Naive thymus-derived CD4-positive, alpha-beta T cell (primary cell): ENCODE measurements at regions of chr20 and their contacts with region 1.

Region 1: DNA sequence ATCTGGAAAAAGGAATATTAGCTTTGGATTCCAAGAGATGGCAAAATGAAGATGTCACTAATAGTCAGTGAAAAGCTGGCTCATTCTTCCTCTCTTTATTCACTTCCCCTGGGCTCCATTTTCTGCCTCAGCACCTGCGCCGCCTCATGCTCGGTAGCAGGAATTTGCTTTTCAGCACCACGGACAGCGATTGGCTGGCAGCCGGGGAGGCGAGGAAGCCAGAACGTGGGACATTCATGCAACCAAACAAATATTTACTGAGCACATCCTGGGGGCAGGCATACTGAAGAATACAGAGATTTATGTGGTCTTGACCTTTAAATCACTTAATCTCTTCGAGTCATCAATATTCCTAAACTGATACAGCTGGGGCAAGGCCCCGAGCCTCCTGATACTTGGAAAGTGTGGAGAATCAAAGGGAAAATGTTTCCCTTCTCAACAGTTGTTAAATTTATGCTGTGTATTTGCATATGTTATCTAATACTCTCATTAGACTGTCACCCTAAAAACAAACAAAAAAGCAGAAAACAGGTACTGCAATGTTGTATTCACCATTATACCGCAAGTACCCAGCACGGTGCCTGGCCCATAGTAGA is 12.1 kb upstream of the PDYN start:
- DNase-seq: peak; percentile 14 to 70 (median 46)
- ATAC-seq: no peak
- H3K4me3 ChIP-seq: no peak overlapping the region
- H3K4me3 Mint-ChIP-seq: no peak overlapping the region
- H3K27ac ChIP-seq: no peak overlapping the region
- H3K27ac Mint-ChIP-seq: no peak overlapping the region
- H3K4me1 ChIP-seq: no peaks in the 10 kb centered on the region
- H3K4me1 Mint-ChIP-seq: no peaks in the 10 kb centered on the region
- H3K27me3 ChIP-seq: peaks cover 0 to 3% of the 10 kb centered on the region in 2 donors
- H3K27me3 Mint-ChIP-seq: peaks cover 2 to 47% (median 36%) of the 10 kb centered on the region in 5 donors

Region 2: GRCh38 chr20:2093159-2093781 is 87.3 kb after region 1 on chr20:
- CTCF ChIA-PET with region 1: no interaction called
- POLR2A ChIA-PET with region 1: no interaction called
- intact Hi-C with region 1: loop called in 1 of 2 experiments (anchors 2 kb)
- DNase-seq: peak in 1 of 9 donors; percentile 19
- ATAC-seq: peak; percentile 40
- H3K4me3 ChIP-seq: no peak overlapping the region
- H3K4me3 Mint-ChIP-seq: no peak overlapping the region
- H3K27ac ChIP-seq: no peak overlapping the region
- H3K27ac Mint-ChIP-seq: no peak overlapping the region
- H3K4me1 ChIP-seq: no peaks in the 10 kb centered on the region
- H3K4me1 Mint-ChIP-seq: peaks cover 0 to 2% (median 0%) of the 10 kb centered on the region in 7 donors
- H3K27me3 ChIP-seq: peaks cover 0 to 5% of the 10 kb centered on the region in 2 donors
- H3K27me3 Mint-ChIP-seq: peaks cover 45 to 51% (median 48%) of the 10 kb centered on the region in 5 donors

Region 3: GRCh38 chr20:2101865-2102584 is 96.1 kb after region 1 on chr20:
- CTCF ChIA-PET with region 1: no interaction called
- POLR2A ChIA-PET with region 1: no interaction called
- intact Hi-C with region 1: loop called in 1 of 2 experiments (anchors 5 kb)
- DNase-seq: peak; percentile 82 to 94 (median 92)
- ATAC-seq: peak; percentile 88
- H3K4me3 ChIP-seq: peak overlapping the region; percentile 88
- H3K4me3 Mint-ChIP-seq: peak overlapping the region; percentile 90 to 97 (median 96)
- H3K27ac ChIP-seq: peak overlapping the region; percentile 96
- H3K27ac Mint-ChIP-seq: peak overlapping the region; percentile 99 to 100 (median 100)
- H3K4me1 ChIP-seq: peaks cover 29 to 38% of the 10 kb centered on the region in 2 donors
- H3K4me1 Mint-ChIP-seq: peaks cover 36 to 58% (median 44%) of the 10 kb centered on the region in 7 donors
- H3K27me3 ChIP-seq: no peaks in the 10 kb centered on the region
- H3K27me3 Mint-ChIP-seq: peaks cover 0 to 4% (median 0%) of the 10 kb centered on the region in 5 donors